GM13977 (cell line): ENCODE measurements at regions of chr10 and their contacts with region 1.

Region 1: DNA sequence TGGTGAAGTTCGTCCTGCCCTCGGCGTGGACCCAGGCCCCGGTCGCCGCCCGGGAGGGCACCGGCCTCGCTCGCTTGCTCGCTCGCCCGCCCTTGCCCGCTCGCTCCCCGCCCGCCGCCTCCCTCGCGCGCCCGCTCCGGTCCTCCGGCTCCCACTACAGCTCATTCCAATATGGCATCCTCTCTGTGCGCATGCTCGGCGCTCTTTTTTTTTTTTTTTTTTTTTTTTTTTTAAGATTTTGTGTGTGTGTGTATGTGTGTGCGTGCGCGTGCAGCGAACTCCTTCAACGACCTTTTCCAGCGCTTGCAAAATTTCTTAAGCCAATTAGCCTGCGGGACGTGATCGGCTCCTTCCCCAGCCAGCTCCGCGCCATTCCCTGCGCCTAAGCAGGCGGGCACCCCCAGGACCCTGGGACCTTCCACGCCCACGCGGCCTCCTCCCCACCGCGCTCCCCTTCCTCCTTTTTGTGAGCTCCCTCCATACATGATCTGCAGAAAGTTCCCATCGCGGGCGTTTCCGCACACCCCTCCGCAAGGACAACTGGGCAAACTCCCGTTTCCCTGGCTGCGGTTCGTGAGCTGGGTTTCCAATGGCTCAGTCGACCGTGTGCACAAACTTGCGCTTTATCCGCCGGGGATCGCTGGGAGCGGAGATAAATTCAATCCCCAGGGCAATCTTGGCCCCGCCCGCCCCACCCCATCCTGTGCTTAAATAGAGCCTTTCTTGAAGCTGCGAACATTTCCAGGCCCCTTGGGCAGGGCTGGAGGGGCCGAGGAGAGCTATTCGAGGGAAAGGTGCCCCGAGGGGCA is at the start of gene SFMBT2:
- DNase-seq: peak; percentile 90
- CTCF ChIP-seq: no peak

Region 2: DNA sequence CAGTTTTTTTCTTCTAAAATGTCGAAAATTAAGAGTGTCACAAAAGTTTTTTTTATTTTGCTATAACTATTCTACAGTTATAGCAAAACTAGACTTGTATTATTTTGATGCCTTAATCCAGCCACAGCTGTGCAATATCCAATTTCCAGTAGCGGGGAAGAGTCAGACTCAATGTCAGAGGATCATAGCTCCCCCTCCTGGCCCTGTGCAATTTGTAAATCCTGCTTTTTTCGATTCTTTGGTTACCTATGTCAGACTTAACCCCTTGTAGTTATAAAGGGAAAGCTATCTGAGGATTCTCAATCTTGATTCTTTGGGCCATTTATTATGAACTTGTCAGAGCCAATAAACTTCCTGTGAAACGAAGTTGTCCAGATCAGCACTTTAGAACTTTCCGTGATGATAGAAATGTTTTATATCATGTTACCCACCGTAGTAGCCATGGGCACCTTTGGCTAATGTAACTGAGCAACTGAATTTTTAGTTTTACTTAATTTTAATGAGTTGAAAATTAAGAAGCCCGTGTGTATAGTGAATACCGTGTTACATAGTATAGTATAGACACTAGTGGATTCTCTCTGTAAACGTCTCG is 743.3 kb before region 1 on chr10:
- in situ Hi-C with region 1: loop called (anchors 25 kb)
- DNase-seq: no peak
- CTCF ChIP-seq: peak; percentile 52

Region 3: GRCh38 chr10:6918305-6918704 is 492.8 kb before region 1 on chr10:
- in situ Hi-C with region 1: loop called (anchors 10 kb)
- DNase-seq: no peak
- CTCF ChIP-seq: peak; percentile 69